Posterior cingulate gyrus (tissue), 11 donors: ENCODE measurements at regions of chr5 and their contacts with region 1.

Region 1: DNA sequence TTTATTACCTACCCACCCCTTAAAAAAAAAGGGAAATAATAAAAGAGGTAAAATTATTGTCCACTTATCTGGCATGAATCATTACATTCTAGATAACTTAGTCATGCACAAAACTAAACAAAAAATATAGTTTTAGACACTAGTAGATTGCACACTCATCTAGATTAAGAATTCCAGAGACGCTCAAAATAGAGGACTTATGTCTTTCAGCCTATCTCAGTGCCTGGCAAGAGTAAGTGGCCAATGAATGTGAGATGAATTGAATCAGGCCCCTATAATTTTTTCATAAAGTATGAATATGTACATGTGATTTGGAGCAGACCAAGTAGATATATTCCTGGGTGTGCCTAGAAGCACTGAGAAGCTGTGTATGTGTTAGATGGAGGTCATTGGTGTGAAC is 2.0 kb upstream of the RXFP3 start:
- DNase-seq: no peak

Region 2: DNA sequence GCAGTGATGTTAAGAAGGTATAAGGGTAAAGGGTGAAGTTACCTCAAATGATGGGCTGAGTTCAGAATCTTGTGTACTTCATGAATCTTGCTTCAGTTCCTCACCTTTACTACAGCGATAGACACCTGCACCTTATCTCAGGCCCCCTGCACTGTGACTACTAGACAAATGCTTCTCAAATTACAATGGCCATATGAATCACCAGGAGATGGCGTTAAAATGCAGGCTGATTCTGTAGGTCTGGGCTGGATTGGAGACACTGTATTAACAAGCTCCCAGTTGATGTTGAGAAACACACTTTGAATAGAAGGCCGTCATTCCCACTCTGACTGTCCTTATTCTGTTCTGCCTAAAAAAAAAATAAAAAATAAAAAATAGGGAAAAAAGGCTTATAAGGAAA is 463.6 kb before region 1 on chr5:
- intact Hi-C with region 1: loop called (anchors 2 kb)
- DNase-seq: peak in 1 of 10 donors; percentile 20